OCI-LY7 (cell line): ENCODE measurements at regions of chr3 and their contacts with region 1.

Region 1: DNA sequence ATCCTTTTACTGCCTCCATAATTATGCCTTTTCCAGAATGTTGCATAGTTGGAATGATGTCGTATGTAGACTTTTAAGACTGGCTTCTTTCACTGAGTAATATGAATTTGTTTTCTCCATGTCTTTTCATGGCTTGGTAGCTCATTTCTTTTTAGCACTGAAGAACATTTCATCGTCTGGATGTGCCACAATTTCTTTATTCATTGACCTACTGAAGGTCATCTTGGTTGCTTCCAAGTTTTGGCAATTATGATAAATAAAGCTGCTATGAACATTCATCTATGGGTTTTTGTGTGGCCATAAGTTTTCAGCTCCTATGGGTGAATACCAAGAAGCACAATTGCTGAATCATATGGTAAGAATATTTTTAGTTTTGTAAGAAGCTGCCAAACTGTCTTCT is 23.2 kb upstream of the RARRES1 start:
- DNase-seq: no peak
- H3K4me3 ChIP-seq: no peak overlapping the region
- H3K27ac ChIP-seq: no peak overlapping the region
- H3K4me1 ChIP-seq: no peaks in the 10 kb centered on the region
- CTCF ChIP-seq: no peak

Region 2: GRCh38 chr3:157174649-157175498 is 1580.5 kb before region 1 on chr3:
- CTCF ChIA-PET with region 1: no interaction called
- POLR2A ChIA-PET with region 1: no interaction called
- intact Hi-C with region 1: no loop called
- DNase-seq: peak; percentile 100
- H3K4me3 ChIP-seq: peak overlapping the region; percentile 88
- H3K27ac ChIP-seq: peak overlapping the region; percentile 86
- H3K4me1 ChIP-seq: peaks cover 26% of the 10 kb centered on the region
- CTCF ChIP-seq: no peak

Region 3: DNA sequence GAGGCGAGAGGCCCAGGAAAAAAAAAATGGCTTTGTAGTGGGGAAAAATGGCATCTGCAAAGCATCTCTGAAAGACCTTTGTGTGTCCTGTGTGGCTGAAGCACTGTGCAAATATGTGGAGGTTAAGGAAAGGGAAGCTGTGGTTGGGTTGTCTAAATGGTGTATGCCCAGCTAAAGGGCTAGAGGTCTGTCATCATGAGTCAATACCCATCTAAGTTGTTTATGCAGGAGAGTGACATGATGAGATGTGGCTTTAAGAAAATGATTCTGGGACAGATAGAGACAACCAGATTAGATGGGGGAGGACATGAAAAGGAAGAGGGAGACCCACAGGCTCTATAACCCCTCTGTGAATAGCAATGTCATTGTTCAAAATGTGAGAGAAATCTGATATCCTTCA is 327.1 kb after region 1 on chr3:
- CTCF ChIA-PET with region 1: no interaction called
- POLR2A ChIA-PET with region 1: no interaction called
- intact Hi-C with region 1: no loop called
- DNase-seq: no peak
- H3K4me3 ChIP-seq: no peak overlapping the region
- H3K27ac ChIP-seq: no peak overlapping the region
- H3K4me1 ChIP-seq: no peaks in the 10 kb centered on the region
- CTCF ChIP-seq: no peak

Region 4: GRCh38 chr3:159102001-159102400 is 346.6 kb after region 1 on chr3:
- CTCF ChIA-PET with region 1: no interaction called
- POLR2A ChIA-PET with region 1: no interaction called
- intact Hi-C with region 1: no loop called
- DNase-seq: no peak
- H3K4me3 ChIP-seq: no peak overlapping the region
- H3K27ac ChIP-seq: no peak overlapping the region
- H3K4me1 ChIP-seq: no peaks in the 10 kb centered on the region
- CTCF ChIP-seq: no peak

Region 5: DNA sequence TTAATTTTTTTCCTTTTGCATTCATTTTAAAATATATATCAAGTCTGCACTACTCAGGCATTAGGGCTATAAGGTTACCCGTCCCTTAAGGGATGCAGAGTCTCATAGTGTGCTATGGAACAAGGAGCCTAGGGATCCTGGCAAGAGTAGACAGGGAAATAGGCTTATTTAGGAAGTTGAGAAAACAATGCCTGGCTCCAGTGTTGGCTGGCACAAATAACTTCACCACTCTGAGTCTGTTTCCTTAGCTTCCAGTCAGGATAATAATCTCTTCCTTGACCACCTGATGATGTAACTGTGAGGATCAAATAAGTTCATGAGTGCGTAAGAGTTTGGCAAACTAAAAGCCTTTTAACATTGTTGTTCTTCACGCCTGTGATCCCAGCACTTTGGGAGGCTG is 692.4 kb after region 1 on chr3:
- CTCF ChIA-PET with region 1: no interaction called
- POLR2A ChIA-PET with region 1: no interaction called
- intact Hi-C with region 1: loop called (anchors 5 kb)
- DNase-seq: no peak
- H3K4me3 ChIP-seq: no peak overlapping the region
- H3K27ac ChIP-seq: no peak overlapping the region
- H3K4me1 ChIP-seq: no peaks in the 10 kb centered on the region
- CTCF ChIP-seq: no peak